Heart right ventricle (tissue), 16 donors: ENCODE measurements at regions of chrX and their contacts with region 1.

Region 1: DNA sequence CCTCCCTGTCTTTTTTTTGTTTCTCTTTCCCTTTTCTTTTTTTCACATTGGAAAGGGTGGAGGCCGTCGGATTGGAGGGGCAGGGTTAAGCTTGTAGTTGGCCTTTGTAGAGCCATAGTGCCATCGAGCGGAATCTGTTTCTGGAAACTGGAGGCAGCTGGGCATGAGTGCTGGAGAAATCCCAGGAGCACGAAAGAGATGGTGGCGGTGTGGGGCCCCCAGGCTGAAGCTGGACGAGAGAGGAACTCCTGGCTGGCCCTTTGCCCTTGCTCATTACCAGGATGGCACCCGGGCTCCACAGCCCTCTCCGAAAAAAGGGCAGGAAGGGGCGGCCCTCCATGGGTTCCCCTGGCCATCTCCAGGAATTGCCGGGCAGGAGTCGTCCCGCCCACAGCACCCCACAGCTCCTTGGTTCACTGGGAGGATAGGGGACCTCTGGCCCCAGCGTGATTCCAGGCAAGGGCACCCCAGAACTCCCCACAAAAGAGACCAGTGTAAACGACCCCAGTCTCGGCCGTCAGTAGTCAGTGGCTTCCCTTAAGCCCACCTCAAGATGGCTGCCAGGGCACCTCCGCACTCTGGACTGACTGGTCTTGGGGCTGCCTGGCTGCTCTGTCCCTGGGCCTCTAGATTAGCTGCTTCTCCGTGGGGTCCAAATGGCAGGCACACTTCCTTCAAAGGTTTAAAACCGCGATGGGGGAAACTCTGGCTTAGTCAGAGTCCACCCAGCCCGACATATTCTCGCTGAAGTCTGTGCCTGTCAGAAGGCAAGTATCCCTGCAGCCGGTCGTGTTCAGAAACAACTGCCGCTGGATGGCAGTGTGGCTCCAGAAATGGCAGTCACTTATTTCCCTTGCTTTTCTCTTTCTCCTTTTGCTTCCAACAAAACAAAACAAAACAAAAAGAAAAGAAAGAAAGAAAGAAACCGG is 74.1 kb downstream of the NBDY start:
- DNase-seq: peak; percentile 36 to 48
- ATAC-seq: peak; percentile 71 to 91 (median 82)
- H3K4me3 ChIP-seq: peak overlapping the region in 5 of 10 donors; percentile 15 to 64 (median 52)
- H3K27ac ChIP-seq: peak overlapping the region in 3 of 10 donors; percentile 76 to 86 (median 83)
- H3K4me1 ChIP-seq: peaks cover 0 to 12% (median 8%) of the 10 kb centered on the region in 9 donors
- H3K27me3 ChIP-seq: peaks cover 0 to 4% (median 0%) of the 10 kb centered on the region in 7 donors
- CTCF ChIP-seq: peak in 8 of 9 donors; percentile 9 to 62 (median 53)

Region 2: GRCh38 chrX:56853436-56853835 is 50.3 kb after region 1 on chrX:
- intact Hi-C with region 1: loop called in 1 of 10 experiments (anchors 10 kb)
- DNase-seq: no peak
- ATAC-seq: no peak
- H3K4me3 ChIP-seq: no peak overlapping the region
- H3K27ac ChIP-seq: no peak overlapping the region
- H3K4me1 ChIP-seq: no peaks in the 10 kb centered on the region
- H3K27me3 ChIP-seq: peaks cover 0 to 82% (median 0%) of the 10 kb centered on the region in 7 donors
- CTCF ChIP-seq: no peak

Region 3: DNA sequence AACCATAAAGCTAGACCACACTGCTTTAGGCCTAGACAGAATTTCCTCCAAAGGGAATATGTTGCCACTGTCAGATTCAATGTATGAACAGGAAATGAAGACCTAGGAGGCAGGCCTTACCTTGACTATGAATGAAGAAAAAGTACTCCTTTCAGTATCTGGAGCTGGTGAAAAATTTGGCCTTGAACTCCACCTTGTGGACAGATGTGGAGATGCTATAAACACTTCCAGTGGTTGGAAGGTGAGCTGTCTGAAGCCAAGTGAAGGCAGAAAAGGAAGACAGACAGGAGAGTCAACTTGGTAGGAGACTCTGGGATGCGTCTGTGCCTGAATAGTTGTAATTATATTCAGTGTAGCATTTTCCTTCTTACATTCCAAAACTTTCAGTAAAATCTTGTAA is 175.0 kb after region 1 on chrX:
- intact Hi-C with region 1: loop called in 4 of 10 experiments (anchors 2 to 5 kb)
- DNase-seq: peak in 1 of 2 donors; percentile 5
- ATAC-seq: peak in 4 of 8 donors; percentile 38 to 63 (median 54)
- H3K4me3 ChIP-seq: no peak overlapping the region
- H3K27ac ChIP-seq: no peak overlapping the region
- H3K4me1 ChIP-seq: no peaks in the 10 kb centered on the region
- H3K27me3 ChIP-seq: peaks cover 0 to 48% (median 0%) of the 10 kb centered on the region in 7 donors
- CTCF ChIP-seq: peak; percentile 28 to 71 (median 60)